Tibial artery (tissue), 4 donors: ENCODE measurements at regions of chr10 and their contacts with region 1.

Region 1: DNA sequence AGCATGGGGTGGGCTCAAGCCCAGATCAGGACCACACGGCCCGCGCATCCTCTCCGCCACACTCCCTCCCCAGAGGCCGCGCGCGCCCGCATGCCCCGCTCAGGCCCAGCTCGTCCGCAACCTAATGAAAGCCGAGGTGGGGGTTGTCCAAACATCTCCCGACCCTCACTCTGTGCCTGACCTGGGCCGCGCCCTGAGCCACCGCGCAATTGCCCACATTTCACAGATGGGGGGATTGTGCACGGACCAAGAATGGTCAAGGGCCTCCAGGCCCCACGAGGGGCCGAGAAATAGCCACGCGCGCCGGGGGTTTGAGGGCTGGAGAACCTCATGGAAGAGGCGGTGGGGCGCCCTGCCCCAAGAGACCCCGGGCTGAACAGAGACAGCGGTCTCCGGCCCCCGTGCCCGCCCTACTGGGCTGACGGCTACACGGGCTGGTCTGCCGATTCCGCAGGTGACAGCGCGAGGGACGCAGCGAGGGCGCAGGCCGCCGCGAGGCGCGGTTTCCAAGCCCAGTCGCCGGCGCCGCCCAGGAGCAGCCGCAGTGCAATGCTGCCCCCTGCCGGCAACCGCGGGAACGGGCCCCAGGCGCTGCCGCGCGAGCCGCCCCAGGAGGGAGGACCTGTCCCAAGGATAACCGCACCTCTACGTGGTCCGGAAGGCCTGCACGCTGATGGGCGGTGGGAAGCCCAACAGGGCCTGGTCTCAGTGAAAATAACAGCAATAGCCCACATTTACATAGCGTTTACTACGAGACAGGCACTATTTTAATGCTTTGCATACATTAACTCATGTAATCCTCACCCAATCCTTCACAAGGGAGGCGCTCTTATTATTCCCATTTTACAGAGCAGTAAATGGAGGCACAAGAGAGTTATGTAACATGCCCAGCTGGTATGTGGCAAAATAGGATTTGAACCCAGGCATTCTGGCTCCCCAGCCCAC is 10.5 kb upstream of the GRID1 start:
- DNase-seq: peak; percentile 57 to 78
- H3K4me3 ChIP-seq: peak overlapping the region in 1 of 2 donors; percentile 37
- H3K27ac ChIP-seq: no peak overlapping the region
- H3K4me1 ChIP-seq: peaks cover 0 to 5% (median 4%) of the 10 kb centered on the region in 4 donors
- H3K27me3 ChIP-seq: peaks cover 0 to 66% of the 10 kb centered on the region in 2 donors
- CTCF ChIP-seq: peak; percentile 98 to 99

Region 2: GRCh38 chr10:85547460-85548023 is 829.6 kb before region 1 on chr10:
- intact Hi-C with region 1: loop called (anchors 2 kb)
- DNase-seq: no peak
- H3K4me3 ChIP-seq: no peak overlapping the region
- H3K27ac ChIP-seq: no peak overlapping the region
- H3K4me1 ChIP-seq: no peaks in the 10 kb centered on the region
- H3K27me3 ChIP-seq: no peaks in the 10 kb centered on the region
- CTCF ChIP-seq: no peak